CD4-positive, alpha-beta T cell (primary cell): ENCODE measurements at regions of chr11 and their contacts with region 1.

Region 1: GRCh38 chr11:57324886-57325734 is at the start of gene TNKS1BP1:
- DNase-seq: peak; percentile 76 to 95 (median 87)
- ATAC-seq: peak; percentile 90
- H3K4me3 ChIP-seq: peak within 1 kb of the TSS; percentile 80
- H3K4me3 Mint-ChIP-seq: peak within 1 kb of the TSS; percentile 93
- H3K27ac ChIP-seq: peak within 1 kb of the TSS; percentile 82 to 84
- H3K27ac Mint-ChIP-seq: peak within 1 kb of the TSS; percentile 95
- H3K4me1 ChIP-seq: peaks cover 30% of the 10 kb centered on the region
- H3K4me1 Mint-ChIP-seq: peaks cover 45% of the 10 kb centered on the region
- H3K27me3 ChIP-seq: no peaks in the 10 kb centered on the region
- H3K27me3 Mint-ChIP-seq: no peaks in the 10 kb centered on the region
- CTCF ChIP-seq: no peak
- total RNA-seq, gene TNKS1BP1: 12.9 to 13.2 TPM

Region 2: GRCh38 chr11:57288771-57289579 is 36.1 kb before region 1 on chr11:
- CTCF ChIA-PET with region 1: no interaction called
- POLR2A ChIA-PET with region 1: no interaction called
- intact Hi-C with region 1: no loop called
- DNase-seq: no peak
- ATAC-seq: no peak
- H3K4me3 ChIP-seq: no peak overlapping the region
- H3K4me3 Mint-ChIP-seq: no peak overlapping the region
- H3K27ac ChIP-seq: no peak overlapping the region
- H3K27ac Mint-ChIP-seq: no peak overlapping the region
- H3K4me1 ChIP-seq: no peaks in the 10 kb centered on the region
- H3K4me1 Mint-ChIP-seq: no peaks in the 10 kb centered on the region
- H3K27me3 ChIP-seq: peaks cover 5 to 10% of the 10 kb centered on the region in 2 experiments
- H3K27me3 Mint-ChIP-seq: peaks cover 45% of the 10 kb centered on the region
- CTCF ChIP-seq: no peak

Region 3: GRCh38 chr11:57335343-57336110 is 10.4 kb after region 1 on chr11 and contains the start of gene SSRP1:
- CTCF ChIA-PET with region 1: interaction called, 14 read pairs
- POLR2A ChIA-PET with region 1: interaction called, 107 read pairs
- intact Hi-C with region 1: loop called (anchors 1 kb)
- DNase-seq: peak; percentile 77 to 95 (median 86)
- ATAC-seq: peak; percentile 97
- H3K4me3 ChIP-seq: peak within 1 kb of the TSS; percentile 80
- H3K4me3 Mint-ChIP-seq: peak within 1 kb of the TSS; percentile 89
- H3K27ac ChIP-seq: peak within 1 kb of the TSS; percentile 72 to 85
- H3K27ac Mint-ChIP-seq: peak within 1 kb of the TSS; percentile 96
- H3K4me1 ChIP-seq: peaks cover 29% of the 10 kb centered on the region
- H3K4me1 Mint-ChIP-seq: peaks cover 33% of the 10 kb centered on the region
- H3K27me3 ChIP-seq: no peaks in the 10 kb centered on the region
- H3K27me3 Mint-ChIP-seq: no peaks in the 10 kb centered on the region
- CTCF ChIP-seq: no peak
- total RNA-seq, gene SSRP1: 36.7 to 41.2 TPM

Region 4: GRCh38 chr11:57657194-57658022 is 332.3 kb after region 1 on chr11 and contains the start of gene CLP1:
- CTCF ChIA-PET with region 1: no interaction called
- POLR2A ChIA-PET with region 1: interaction called, 5 read pairs
- intact Hi-C with region 1: loop called in 1 of 2 experiments (anchors 5 kb)
- DNase-seq: peak; percentile 94 to 100 (median 98)
- ATAC-seq: peak; percentile 95
- H3K4me3 ChIP-seq: peak within 1 kb of the TSS; percentile 93
- H3K4me3 Mint-ChIP-seq: peak within 1 kb of the TSS; percentile 96
- H3K27ac ChIP-seq: peak within 1 kb of the TSS; percentile 92 to 93
- H3K27ac Mint-ChIP-seq: peak within 1 kb of the TSS; percentile 90
- H3K4me1 ChIP-seq: peaks cover 24% of the 10 kb centered on the region
- H3K4me1 Mint-ChIP-seq: peaks cover 24% of the 10 kb centered on the region
- H3K27me3 ChIP-seq: no peaks in the 10 kb centered on the region
- H3K27me3 Mint-ChIP-seq: no peaks in the 10 kb centered on the region
- CTCF ChIP-seq: no peak
- total RNA-seq, gene CLP1: 21.8 to 24.2 TPM

Region 5: DNA sequence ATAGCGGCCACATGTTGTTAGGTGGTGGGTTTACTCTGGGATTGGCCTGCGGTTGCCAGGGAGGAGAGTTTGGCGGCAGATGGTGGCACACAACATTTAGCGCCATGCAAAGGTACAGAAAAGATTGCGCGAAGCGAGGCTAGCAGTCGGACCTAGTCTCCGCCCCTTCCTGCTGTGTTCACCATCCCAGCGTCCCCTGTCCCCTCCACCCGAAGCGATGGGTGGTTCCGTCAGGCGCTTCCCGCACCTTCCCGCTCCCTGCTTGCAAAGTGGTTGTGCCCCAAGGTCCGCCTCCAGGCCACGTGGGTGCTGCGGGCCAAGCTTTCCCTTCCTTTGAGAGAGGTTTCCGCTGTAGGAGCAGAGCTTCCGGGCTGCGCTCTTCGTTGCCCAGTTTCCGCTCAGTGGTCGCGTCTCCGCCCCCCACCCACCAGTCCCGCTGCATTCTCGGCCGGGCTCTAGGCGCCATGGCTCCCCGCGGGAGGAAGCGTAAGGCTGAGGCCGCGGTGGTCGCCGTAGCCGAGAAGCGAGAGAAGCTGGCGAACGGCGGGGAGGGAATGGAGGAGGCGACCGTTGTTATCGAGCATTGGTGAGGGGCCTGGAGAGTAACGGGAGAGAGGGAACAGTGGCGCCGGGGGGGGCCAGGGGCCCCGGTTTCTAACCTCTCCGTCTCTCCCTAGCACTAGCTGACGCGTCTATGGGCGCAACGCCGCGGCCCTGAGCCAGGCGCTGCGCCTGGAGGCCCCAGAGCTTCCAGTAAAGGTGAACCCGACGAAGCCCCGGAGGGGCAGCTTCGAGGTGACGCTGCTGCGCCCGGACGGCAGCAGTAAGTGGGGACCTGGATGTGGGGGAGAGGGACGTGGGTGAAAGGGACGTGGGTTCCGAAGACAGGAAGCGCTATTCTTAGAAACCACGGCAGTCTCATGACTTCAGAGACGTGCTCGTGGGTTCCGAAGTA is 416.3 kb after region 1 on chr11 and contains the start of gene SELENOH:
- CTCF ChIA-PET with region 1: no interaction called
- POLR2A ChIA-PET with region 1: interaction called, 3 read pairs
- intact Hi-C with region 1: loop called in 1 of 2 experiments (anchors 10 kb)
- DNase-seq: peak; percentile 82 to 97 (median 90)
- ATAC-seq: peak; percentile 89
- H3K4me3 ChIP-seq: peak within 1 kb of the TSS; percentile 92
- H3K4me3 Mint-ChIP-seq: peak within 1 kb of the TSS; percentile 97
- H3K27ac ChIP-seq: peak within 1 kb of the TSS; percentile 91 to 96
- H3K27ac Mint-ChIP-seq: peak within 1 kb of the TSS; percentile 95
- H3K4me1 ChIP-seq: peaks cover 31% of the 10 kb centered on the region
- H3K4me1 Mint-ChIP-seq: peaks cover 38% of the 10 kb centered on the region
- H3K27me3 ChIP-seq: no peaks in the 10 kb centered on the region
- H3K27me3 Mint-ChIP-seq: no peaks in the 10 kb centered on the region
- CTCF ChIP-seq: no peak
- total RNA-seq, gene SELENOH: 48.0 to 48.5 TPM